Activated CD4-positive, alpha-beta T cell treated with anti-CD3 and anti-CD28 coated beads for 36 hours (primary cell): ENCODE measurements at regions of chr4 and their contacts with region 1.

Region 1: DNA sequence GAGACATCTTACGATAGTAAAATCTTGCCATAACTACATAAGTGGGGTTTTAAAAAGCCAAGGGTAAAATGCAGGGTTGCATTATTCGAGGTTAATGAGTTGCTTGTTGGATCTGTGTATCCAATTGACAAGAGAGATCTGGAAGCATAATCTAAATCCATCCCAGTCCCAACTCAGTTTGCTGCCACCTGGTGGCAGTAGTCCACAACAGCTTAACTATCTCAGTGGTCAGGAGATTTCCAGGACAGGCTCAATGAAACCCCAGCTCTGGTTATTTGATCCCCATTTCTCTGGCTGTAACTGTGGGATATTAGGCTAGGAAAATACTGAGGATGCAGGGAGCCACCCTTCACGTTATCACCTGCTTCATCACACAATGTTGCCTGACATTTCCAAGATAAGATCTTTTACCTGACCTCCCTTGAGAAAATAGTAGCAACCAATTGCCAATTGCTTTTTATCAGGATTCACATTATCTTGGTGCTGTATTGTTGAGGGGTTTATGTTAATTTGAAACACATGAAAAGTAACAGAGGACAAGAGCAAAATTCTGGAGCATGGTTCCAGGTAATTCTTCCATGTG is 88.2 kb upstream of the TNIP3 start:
- DNase-seq: peak; percentile 73
- ATAC-seq: no peak
- H3K4me3 Mint-ChIP-seq: no peak overlapping the region
- H3K27ac Mint-ChIP-seq: no peak overlapping the region
- H3K4me1 Mint-ChIP-seq: peaks cover 67% of the 10 kb centered on the region
- H3K27me3 Mint-ChIP-seq: no peaks in the 10 kb centered on the region

Region 2: DNA sequence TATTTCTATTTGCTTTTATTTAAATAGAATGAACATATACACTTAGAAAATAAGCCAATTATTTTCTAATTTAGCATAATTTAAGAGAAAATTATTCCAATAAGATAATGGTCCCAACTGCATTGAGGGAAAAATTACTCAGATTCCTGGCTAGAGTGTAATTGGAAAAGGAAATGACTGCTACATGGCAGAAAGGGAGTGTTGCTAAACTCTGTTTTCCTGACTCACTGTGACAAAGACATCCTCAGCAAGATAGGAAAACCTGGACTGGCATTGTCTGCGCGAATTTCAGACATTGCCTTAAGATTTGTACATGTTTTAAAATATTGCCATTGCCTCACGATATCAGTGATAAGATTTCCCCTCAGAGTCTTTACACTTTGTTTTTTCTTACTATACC is 96.4 kb before region 1 on chr4:
- CTCF ChIA-PET with region 1: interaction called, 5 read pairs
- POLR2A ChIA-PET with region 1: interaction called, 4 read pairs
- intact Hi-C with region 1: loop called in 1 of 2 experiments (anchors 1 kb)
- DNase-seq: no peak
- ATAC-seq: no peak
- H3K4me3 Mint-ChIP-seq: peak overlapping the region; percentile 4
- H3K27ac Mint-ChIP-seq: no peak overlapping the region
- H3K4me1 Mint-ChIP-seq: peaks cover 53% of the 10 kb centered on the region
- H3K27me3 Mint-ChIP-seq: peaks cover 12% of the 10 kb centered on the region

Region 3: DNA sequence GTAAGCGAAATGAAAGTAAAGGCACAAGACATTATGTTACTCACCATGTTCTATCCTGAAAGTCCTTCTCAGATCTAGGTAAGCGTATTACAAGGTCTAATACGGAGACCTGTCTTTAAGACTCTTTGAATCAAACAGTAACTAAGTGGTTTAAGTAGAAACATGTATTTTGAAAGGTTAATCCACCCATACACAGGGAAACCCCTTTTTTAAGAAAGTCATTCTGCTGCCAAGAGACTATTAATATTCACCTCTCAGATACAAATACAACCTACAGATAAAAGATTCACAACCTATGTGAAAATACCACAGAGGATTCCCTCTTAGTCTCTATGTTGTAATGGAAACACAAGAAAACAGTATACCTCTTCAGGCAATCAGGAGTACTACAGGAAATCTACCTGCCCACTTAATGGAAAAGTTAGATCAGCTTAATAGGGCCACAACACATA is 24.9 kb before region 1 on chr4:
- CTCF ChIA-PET with region 1: interaction called, 10 read pairs
- POLR2A ChIA-PET with region 1: no interaction called
- intact Hi-C with region 1: loop called (anchors 1 kb)
- DNase-seq: no peak
- ATAC-seq: peak; percentile 93
- H3K4me3 Mint-ChIP-seq: peak overlapping the region; percentile 62
- H3K27ac Mint-ChIP-seq: peak overlapping the region; percentile 70
- H3K4me1 Mint-ChIP-seq: peaks cover 42% of the 10 kb centered on the region
- H3K27me3 Mint-ChIP-seq: peaks cover 2% of the 10 kb centered on the region

Region 4: DNA sequence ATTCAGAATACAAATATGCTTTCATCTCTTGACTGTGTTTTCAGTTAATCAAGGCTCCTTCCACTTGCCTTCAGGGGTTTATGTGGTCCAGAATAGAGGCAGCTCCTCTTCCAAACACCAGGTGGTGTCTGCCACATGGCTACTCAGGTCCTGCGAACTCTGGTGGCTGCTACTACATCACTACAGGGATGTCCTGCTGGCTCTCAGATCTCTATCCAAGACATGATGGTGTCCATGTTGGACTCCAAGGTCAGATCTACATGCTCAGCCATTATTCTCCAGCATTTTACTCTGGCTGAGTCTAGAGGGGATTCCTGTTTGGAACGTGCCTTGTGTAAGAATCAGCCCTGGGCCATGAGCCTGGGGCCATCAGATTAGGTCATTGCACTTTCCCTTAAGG is 25.3 kb after region 1 on chr4:
- CTCF ChIA-PET with region 1: interaction called, 6 read pairs
- POLR2A ChIA-PET with region 1: no interaction called
- intact Hi-C with region 1: loop called (anchors 1 kb)
- DNase-seq: peak; percentile 19
- ATAC-seq: no peak
- H3K4me3 Mint-ChIP-seq: no peak overlapping the region
- H3K27ac Mint-ChIP-seq: no peak overlapping the region
- H3K4me1 Mint-ChIP-seq: peaks cover 22% of the 10 kb centered on the region
- H3K27me3 Mint-ChIP-seq: peaks cover 19% of the 10 kb centered on the region

Region 5: GRCh38 chr4:121711263-121712000 is 459.1 kb after region 1 on chr4:
- CTCF ChIA-PET with region 1: no interaction called
- POLR2A ChIA-PET with region 1: no interaction called
- intact Hi-C with region 1: loop called (anchors 2 to 5 kb)
- DNase-seq: peak; percentile 74
- ATAC-seq: peak; percentile 40
- H3K4me3 Mint-ChIP-seq: no peak overlapping the region
- H3K27ac Mint-ChIP-seq: no peak overlapping the region
- H3K4me1 Mint-ChIP-seq: peaks cover 29% of the 10 kb centered on the region
- H3K27me3 Mint-ChIP-seq: peaks cover 40% of the 10 kb centered on the region